ENCODE measurements at regions of chr20 and their contacts with region 1.

Region 1: DNA sequence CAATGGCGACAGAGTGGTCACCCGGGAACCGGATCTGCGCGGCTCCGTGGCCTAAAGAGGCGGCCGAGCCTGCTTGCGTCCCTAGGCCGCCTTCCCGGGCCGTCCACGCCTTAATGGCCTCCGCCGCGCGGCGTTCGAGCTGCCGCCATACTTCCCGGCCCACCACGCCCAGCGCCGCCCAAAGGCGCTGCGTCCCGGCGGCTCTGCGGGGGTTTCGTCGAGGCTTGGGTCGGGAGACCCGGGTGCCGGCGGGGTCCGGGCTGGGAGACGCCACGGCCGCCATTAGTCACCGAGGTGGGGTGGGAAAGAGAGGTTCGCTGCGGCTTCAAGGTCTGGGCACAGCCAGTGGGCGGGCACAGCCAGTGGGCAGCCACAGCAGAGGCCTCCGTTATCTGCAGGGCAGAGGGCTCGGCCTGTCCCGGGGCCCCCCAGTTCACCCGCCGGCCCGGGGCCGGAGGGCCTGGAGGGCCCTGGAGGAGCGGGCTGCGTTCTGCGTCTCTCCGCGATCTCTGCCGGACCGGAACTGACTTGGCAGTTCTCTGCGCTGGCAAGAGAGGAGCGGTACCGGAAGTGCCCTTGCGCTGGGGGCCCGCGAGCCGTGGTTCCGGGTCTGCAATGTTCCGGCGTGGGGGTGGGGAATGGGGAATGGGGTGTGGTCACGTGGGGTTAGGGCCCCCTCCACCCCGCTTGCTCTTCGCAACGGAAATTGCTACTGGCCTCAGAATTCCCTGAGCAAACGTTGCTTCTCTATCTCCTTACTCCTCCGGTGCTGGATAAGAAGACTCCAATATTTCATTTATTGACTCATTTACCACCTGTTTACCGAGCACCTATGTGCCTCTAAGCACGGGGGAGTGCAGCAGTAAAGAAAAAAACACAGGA is 82.3 kb downstream of the CNBD2 start:
- DNase-seq: peak; percentile 72 to 95 (median 89)
- ATAC-seq: peak; percentile 93
- H3K4me3 ChIP-seq: peak overlapping the region; percentile 81 to 93
- H3K4me3 Mint-ChIP-seq: peak overlapping the region; percentile 90
- H3K27ac ChIP-seq: peak overlapping the region; percentile 84 to 94
- H3K27ac Mint-ChIP-seq: peak overlapping the region; percentile 88
- H3K4me1 ChIP-seq: peaks cover 20% of the 10 kb centered on the region
- H3K4me1 Mint-ChIP-seq: peaks cover 45% of the 10 kb centered on the region
- H3K27me3 ChIP-seq: no peaks in the 10 kb centered on the region
- H3K27me3 Mint-ChIP-seq: peaks cover 2% of the 10 kb centered on the region
- CTCF ChIP-seq: no peak

Region 2: DNA sequence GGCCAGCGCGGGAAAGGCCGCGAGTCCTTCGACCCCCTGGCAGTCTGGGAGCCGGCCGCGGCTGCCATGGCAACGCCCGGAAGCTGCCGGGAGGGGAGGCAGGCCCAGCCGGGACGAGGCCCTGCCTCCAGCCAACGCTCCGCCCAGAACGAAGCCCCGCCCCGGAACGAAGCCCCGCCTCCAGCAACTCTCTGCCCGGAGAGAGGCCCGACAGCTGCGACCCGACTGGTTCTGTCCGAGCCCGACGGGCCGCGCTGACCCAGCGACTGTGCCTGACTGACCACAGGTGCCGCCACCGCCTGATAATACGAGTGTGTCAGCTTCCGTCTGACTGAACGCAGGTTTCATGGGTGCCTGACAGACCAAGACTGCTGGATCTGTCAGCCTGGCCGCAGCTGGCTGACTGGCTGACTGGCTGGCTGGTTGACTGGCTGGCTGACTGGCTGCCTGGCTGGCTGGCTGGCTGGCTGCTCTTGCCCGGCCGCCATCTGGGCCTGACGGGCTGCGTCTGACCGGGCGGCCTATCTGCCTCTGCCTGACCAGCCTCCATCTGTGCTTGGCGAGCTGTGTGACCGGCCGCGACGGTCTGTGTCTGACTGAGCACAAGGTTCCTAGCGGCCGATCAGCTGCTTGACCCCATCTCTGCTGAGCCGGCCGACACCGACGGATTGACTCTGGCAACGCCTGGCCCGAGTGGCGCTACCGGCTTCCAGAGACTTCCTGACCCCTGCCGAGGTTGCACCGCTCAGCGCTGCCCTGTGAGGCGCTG is 14.2 kb after region 1 on chr20:
- CTCF ChIA-PET with region 1: no interaction called
- POLR2A ChIA-PET with region 1: interaction called, 14 read pairs
- intact Hi-C with region 1: loop called (anchors 1 kb)
- DNase-seq: peak; percentile 85 to 97 (median 93)
- ATAC-seq: peak; percentile 97
- H3K4me3 ChIP-seq: peak overlapping the region; percentile 66 to 74
- H3K4me3 Mint-ChIP-seq: peak overlapping the region; percentile 92
- H3K27ac ChIP-seq: peak overlapping the region; percentile 44 to 48
- H3K27ac Mint-ChIP-seq: peak overlapping the region; percentile 70
- H3K4me1 ChIP-seq: peaks cover 12% of the 10 kb centered on the region
- H3K4me1 Mint-ChIP-seq: peaks cover 5% of the 10 kb centered on the region
- H3K27me3 ChIP-seq: no peaks in the 10 kb centered on the region
- H3K27me3 Mint-ChIP-seq: peaks cover 6% of the 10 kb centered on the region
- CTCF ChIP-seq: no peak

Region 3: GRCh38 chr20:36093025-36093803 is 42.5 kb after region 1 on chr20:
- CTCF ChIA-PET with region 1: no interaction called
- POLR2A ChIA-PET with region 1: no interaction called
- intact Hi-C with region 1: loop called in 1 of 2 experiments (anchors 2 kb)
- DNase-seq: peak in 7 of 9 experiments; percentile 5 to 60 (median 48)
- ATAC-seq: peak; percentile 53
- H3K4me3 ChIP-seq: peak overlapping the region; percentile 45 to 69
- H3K4me3 Mint-ChIP-seq: peak overlapping the region; percentile 90
- H3K27ac ChIP-seq: no peak overlapping the region
- H3K27ac Mint-ChIP-seq: peak overlapping the region; percentile 18
- H3K4me1 ChIP-seq: peaks cover 9% of the 10 kb centered on the region
- H3K4me1 Mint-ChIP-seq: peaks cover 15% of the 10 kb centered on the region
- H3K27me3 ChIP-seq: peaks cover 8 to 21% of the 10 kb centered on the region in 2 experiments
- H3K27me3 Mint-ChIP-seq: peaks cover 36% of the 10 kb centered on the region
- CTCF ChIP-seq: no peak

Measured in CD8-positive, alpha-beta T cell (primary cell).